ENCODE measurements at regions of chr20 and their contacts with region 1.

Region 1: DNA sequence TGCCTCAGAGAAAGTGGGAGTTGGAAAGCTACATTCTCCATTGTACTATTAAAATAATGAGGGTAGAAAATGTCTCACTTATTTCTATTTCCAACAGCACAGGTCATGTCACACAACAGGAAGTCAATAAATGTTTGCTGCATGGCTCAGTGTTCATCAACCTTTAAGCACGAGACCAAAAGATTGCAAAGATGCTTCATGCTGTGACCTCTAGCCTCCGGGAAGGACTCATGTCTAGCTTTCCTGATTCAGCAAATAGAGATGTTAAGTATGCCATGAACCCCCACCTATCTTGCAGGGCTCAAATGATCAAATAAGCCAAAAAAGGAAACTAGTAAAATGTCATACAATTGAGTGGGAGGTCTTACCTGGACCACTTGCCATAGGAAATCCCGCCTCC is 57.4 kb downstream of the NCOA6 start:
- DNase-seq: no peak
- ATAC-seq: no peak
- H3K4me3 ChIP-seq: no peak overlapping the region
- H3K27ac ChIP-seq: no peak overlapping the region
- H3K4me1 ChIP-seq: peaks cover 0 to 3% of the 10 kb centered on the region in 2 experiments; a peak in 2 of 5 replicates
- H3K27me3 ChIP-seq: no peaks in the 10 kb centered on the region
- CTCF ChIP-seq: no peak
- EP300 ChIP-seq: no peak
- POLR2A ChIP-seq: no peak
- RAD21 ChIP-seq: no peak

Region 2: DNA sequence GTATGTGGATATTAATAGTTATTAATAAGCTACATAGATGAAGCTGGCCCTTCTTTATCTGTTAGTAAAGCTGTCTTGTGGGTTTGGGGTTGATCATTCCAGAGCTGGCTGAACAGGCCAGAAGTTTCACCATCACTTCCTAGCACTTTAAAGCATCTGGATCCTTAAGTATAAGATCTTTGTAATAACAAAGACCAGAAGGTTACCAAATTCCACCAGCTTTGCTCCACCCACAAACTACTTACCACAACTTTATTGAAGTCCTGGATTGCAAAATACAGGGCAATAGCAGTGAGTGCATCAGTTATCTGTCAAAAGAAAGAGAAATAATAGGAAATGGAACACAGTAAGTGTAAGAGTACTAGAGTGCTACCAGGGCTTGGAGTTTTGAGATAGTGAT is 124.2 kb before region 1 on chr20:
- CTCF ChIA-PET with region 1: no interaction called
- POLR2A ChIA-PET with region 1: no interaction called
- in situ Hi-C with region 1: no loop called
- intact Hi-C with region 1: no loop called
- DNase-seq: no peak
- ATAC-seq: no peak
- H3K4me3 ChIP-seq: no peak overlapping the region
- H3K27ac ChIP-seq: no peak overlapping the region
- H3K4me1 ChIP-seq: no peaks in the 10 kb centered on the region
- H3K27me3 ChIP-seq: no peaks in the 10 kb centered on the region
- CTCF ChIP-seq: no peak
- EP300 ChIP-seq: no peak
- POLR2A ChIP-seq: no peak
- RAD21 ChIP-seq: no peak

Region 3: GRCh38 chr20:34709831-34710567 is 58.1 kb before region 1 on chr20:
- CTCF ChIA-PET with region 1: no interaction called
- POLR2A ChIA-PET with region 1: no interaction called
- in situ Hi-C with region 1: no loop called
- intact Hi-C with region 1: loop called (anchors 5 kb)
- DNase-seq: peak in 2 of 4 experiments; percentile 49 to 52
- ATAC-seq: no peak
- H3K4me3 ChIP-seq: peak overlapping the region; percentile 73
- H3K27ac ChIP-seq: peak overlapping the region; percentile 72; the same call in 2 of the 3 replicates
- H3K4me1 ChIP-seq: peaks cover 35 to 39% of the 10 kb centered on the region in 2 experiments
- H3K27me3 ChIP-seq: no peaks in the 10 kb centered on the region
- CTCF ChIP-seq: 0 out of 6 replicates have a peak, but pooled peaks of 1 of the 3 experiments have one; percentile 12
- EP300 ChIP-seq: no peak
- POLR2A ChIP-seq: no peak
- RAD21 ChIP-seq: no peak

Region 4: DNA sequence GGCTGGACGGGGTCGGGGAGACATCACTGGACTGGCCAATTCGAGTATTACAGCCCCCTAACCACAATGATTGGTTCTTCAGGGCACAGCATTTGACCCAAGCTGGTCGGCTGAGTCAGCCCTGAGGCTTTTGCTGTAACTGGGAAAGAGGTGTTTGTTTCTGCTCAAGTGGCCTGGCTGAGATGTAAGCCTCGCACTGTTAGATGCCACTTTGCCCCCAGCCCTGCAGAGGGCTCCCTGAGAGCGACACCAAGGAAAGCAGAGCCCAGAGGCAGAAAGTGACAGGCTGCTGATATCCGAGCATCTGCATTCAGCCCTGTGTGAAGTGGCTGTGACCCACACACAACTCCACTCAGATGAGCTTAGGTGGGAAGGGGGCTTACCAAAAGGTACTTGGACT is 793.2 kb after region 1 on chr20:
- CTCF ChIA-PET with region 1: no interaction called
- POLR2A ChIA-PET with region 1: no interaction called
- in situ Hi-C with region 1: no loop called
- intact Hi-C with region 1: no loop called
- DNase-seq: peak in 3 of 4 experiments; percentile 28 to 37 (median 34)
- ATAC-seq: peak; percentile 78
- H3K4me3 ChIP-seq: no peak overlapping the region
- H3K27ac ChIP-seq: no peak overlapping the region
- H3K4me1 ChIP-seq: peaks cover 0 to 14% of the 10 kb centered on the region in 2 experiments; a peak in 2 of 5 replicates
- H3K27me3 ChIP-seq: peaks cover 2 to 14% of the 10 kb centered on the region in 2 experiments; a peak in 4 of 5 replicates
- CTCF ChIP-seq: peak; percentile 42 to 56 (median 55)
- EP300 ChIP-seq: no peak
- POLR2A ChIP-seq: no peak
- RAD21 ChIP-seq: peak in 1 of 2 experiments; percentile 59; a peak in 2 of 4 replicates